ENCODE measurements at regions of chr6 and their contacts with region 1.

Region 1: GRCh38 chr6:27672113-27672799 is 199.4 kb upstream of the ZNF184 start:
- DNase-seq: no peak
- H3K4me3 ChIP-seq: no peak overlapping the region
- H3K4me3 Mint-ChIP-seq: peak overlapping the region; percentile 48 to 69
- H3K27ac ChIP-seq: no peak overlapping the region
- H3K27ac Mint-ChIP-seq: no peak overlapping the region
- H3K4me1 ChIP-seq: peaks cover 12 to 18% of the 10 kb centered on the region in 2 donors
- H3K4me1 Mint-ChIP-seq: peaks cover 41% of the 10 kb centered on the region
- H3K27me3 ChIP-seq: peaks cover 85 to 97% of the 10 kb centered on the region in 2 donors
- H3K27me3 Mint-ChIP-seq: peaks cover 81 to 96% (median 94%) of the 10 kb centered on the region in 3 donors
- CTCF ChIP-seq: no peak

Region 2: DNA sequence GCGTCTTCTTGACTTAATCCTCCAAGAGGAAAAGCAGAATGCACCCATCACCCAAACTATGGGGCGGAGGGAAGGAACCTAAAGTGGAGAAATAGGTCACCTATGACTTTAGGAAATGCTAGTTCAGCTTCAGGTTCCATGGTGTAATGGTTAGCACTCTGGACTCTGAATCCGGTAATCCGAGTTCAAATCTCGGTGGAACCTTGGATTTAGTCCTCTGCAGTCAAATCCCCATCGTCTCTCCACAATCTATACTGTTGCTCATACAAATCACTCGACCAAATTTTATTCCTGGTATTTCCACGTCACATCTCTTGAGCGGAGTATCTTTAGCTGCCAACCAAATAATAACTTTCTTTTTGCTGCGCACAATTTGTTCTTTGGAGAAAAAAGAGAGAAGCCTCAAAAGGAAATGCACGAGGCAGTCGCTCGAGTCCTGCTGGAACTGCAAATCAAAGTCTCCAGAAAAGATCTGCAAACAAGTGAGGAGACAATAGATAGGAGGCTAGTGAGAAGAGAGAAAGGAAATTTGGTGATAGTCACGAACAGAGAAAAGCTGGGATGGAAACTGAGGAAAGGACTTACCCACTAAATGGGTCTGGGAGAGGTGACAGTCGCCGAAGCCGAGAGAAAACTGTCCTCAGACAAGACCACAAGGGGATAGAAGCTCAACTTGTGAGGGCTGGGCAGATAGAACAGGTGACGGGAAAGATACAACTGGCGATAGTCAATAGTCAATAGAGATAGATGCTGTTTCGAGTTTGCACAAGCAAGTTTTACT is 376.8 kb before region 1 on chr6:
- intact Hi-C with region 1: loop called in 1 of 2 experiments (anchors 10 kb)
- DNase-seq: no peak
- H3K4me3 ChIP-seq: no peak overlapping the region
- H3K4me3 Mint-ChIP-seq: peak overlapping the region in 1 of 2 donors; percentile 76
- H3K27ac ChIP-seq: no peak overlapping the region
- H3K27ac Mint-ChIP-seq: no peak overlapping the region
- H3K4me1 ChIP-seq: no peaks in the 10 kb centered on the region
- H3K4me1 Mint-ChIP-seq: no peaks in the 10 kb centered on the region
- H3K27me3 ChIP-seq: peaks cover 75 to 86% of the 10 kb centered on the region in 2 donors
- H3K27me3 Mint-ChIP-seq: peaks cover 79 to 81% (median 80%) of the 10 kb centered on the region in 3 donors
- CTCF ChIP-seq: no peak

Region 3: DNA sequence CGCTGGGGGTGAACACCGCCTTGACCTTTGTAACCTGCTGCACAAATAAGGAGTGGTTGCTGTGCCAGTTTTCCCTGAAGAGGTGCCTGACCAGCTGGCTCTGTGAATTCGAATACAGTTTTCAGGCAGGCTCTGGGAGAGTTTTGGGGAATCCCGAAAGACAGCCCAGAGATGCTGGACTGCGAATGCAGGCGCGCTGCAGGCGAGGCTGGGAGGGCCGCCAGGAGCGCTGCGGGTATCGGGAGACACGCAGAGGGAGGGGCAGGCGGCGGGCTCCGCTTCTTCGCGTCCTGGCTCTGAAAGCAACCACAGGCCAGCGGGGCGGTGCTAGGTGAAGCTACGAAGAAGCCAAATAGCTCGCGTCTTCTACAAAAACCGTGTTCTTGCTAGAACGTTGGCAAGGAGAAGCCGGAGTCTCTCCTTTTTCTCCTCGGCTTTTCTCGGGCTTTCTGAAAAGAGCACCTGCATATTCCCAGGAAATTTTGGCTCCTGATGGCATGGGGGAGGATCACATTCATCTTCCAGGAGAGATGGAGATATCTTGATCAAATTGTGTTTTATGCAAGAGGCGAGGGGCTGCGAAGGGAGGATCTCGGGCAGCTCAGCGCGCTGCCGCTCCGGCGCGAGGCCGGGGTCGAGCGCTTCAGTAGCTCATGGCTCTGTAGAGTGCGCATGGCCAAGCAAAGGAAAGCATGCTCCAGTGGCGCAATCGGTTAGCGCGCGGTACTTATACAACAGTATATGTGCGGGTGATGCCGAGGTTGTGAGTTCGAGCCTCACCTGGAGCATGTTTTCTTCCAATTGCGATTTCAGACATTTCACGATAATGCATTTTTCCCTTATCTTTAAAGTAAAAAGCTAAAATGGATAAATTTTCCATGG is 41.3 kb before region 1 on chr6:
- intact Hi-C with region 1: no loop called
- DNase-seq: no peak
- H3K4me3 ChIP-seq: no peak overlapping the region
- H3K4me3 Mint-ChIP-seq: peak overlapping the region in 1 of 2 donors; percentile 77
- H3K27ac ChIP-seq: no peak overlapping the region
- H3K27ac Mint-ChIP-seq: peak overlapping the region in 1 of 7 donors; percentile 53
- H3K4me1 ChIP-seq: no peaks in the 10 kb centered on the region
- H3K4me1 Mint-ChIP-seq: peaks cover 3% of the 10 kb centered on the region
- H3K27me3 ChIP-seq: peaks cover 35 to 43% of the 10 kb centered on the region in 2 donors
- H3K27me3 Mint-ChIP-seq: peaks cover 35 to 55% (median 53%) of the 10 kb centered on the region in 3 donors
- CTCF ChIP-seq: no peak